PC-9 (cell line): ENCODE measurements at regions of chr16 and their contacts with region 1.

Region 1: GRCh38 chr16:81996664-81997622 is 14.3 kb downstream of the SDR42E1 start:
- DNase-seq: no peak
- H3K4me3 ChIP-seq: no peak overlapping the region
- H3K27ac ChIP-seq: peak overlapping the region; percentile 27; the same call in 1 of the 2 replicates
- H3K4me1 ChIP-seq: peaks cover 13% of the 10 kb centered on the region
- H3K27me3 ChIP-seq: no peaks in the 10 kb centered on the region
- CTCF ChIP-seq: peak; percentile 40

Region 2: GRCh38 chr16:81885976-81886586 is 110.9 kb before region 1 on chr16:
- CTCF ChIA-PET with region 1: no interaction called
- POLR2A ChIA-PET with region 1: no interaction called
- intact Hi-C with region 1: loop called (anchors 1 kb)
- DNase-seq: peak in 1 of 2 experiments; percentile 37
- H3K4me3 ChIP-seq: no peak overlapping the region
- H3K27ac ChIP-seq: no peak overlapping the region
- H3K4me1 ChIP-seq: 0 out of 2 replicates have a peak, but pooled peaks cover 12% of the 10 kb centered on the region
- H3K27me3 ChIP-seq: no peaks in the 10 kb centered on the region
- CTCF ChIP-seq: peak; percentile 80

Region 3: DNA sequence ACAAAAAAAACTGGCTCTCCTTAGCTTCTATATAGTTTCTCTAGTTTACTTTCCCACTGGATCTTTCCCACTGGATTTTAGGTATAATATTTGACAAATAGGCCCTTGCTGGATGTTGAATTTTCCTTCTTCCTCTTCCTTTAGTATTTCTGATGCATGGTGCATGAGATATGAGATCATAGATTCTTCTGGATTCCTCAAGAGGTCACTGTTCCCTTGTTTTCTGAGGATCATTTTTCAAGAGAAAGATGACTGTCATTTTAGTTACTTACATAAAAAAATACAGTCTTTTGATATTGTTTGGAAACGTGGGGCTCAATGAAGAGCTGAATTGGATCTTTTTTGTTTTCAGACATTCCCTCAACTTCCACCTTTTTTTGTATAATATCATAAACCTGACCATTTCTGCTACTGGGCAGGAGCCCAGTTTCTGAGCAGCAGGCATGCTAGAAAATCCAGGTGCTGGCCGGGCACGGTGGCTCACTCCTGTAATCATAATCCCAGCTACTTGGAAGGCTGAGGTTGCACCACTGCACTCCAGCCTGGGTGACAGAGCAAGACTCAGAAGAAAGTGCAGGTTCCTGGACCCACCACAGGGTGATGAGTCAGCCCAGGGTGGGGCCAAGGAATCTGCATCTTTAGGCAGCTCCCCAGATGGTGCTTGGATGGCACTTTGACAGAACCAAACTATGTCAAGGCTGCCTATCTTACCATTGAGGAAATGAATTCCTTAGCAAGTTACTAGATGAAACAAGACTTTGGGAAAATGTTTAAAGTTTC is 56.0 kb before region 1 on chr16:
- CTCF ChIA-PET with region 1: interaction called, 5 read pairs
- POLR2A ChIA-PET with region 1: no interaction called
- intact Hi-C with region 1: loop called (anchors 5 kb)
- DNase-seq: peak in 1 of 2 experiments; percentile 64
- H3K4me3 ChIP-seq: no peak overlapping the region
- H3K27ac ChIP-seq: no peak overlapping the region
- H3K4me1 ChIP-seq: no peaks in the 10 kb centered on the region
- H3K27me3 ChIP-seq: no peaks in the 10 kb centered on the region
- CTCF ChIP-seq: peak; percentile 74